Caco-2 (cell line): ENCODE measurements at regions of chr5 and their contacts with region 1.

Region 1: DNA sequence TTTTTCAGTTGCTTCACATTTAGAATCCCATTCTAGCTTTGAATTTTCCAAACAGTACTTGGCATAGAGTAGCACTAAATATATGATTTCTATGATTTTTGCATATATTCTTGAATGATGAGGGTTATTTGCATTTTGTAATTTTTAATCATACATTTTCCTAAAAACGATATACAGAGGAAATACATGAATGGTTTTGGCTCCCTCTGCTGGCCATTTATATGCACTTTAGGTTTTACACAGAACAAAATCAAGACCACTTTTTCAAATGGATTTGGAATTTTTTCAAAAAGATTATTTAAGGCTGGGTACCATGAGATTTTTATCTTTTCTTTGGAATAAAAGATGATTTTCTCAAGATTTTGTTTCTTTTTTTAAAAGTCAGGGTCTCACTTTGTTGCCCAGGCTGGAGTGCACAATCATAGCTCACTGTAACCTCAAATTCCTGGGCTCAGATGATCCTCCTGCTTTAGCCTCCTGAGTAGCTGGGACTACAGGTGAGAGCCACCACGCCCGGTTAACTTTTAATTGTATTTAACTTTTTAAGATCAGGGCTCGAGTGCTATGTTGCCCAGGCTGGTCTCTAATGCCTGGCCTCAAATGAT is 16.7 kb upstream of the COMMD10 start:
- DNase-seq: peak in 1 of 2 experiments; percentile 19
- H3K4me3 ChIP-seq: no peak overlapping the region
- H3K4me3 Mint-ChIP-seq: no peak overlapping the region
- H3K27ac Mint-ChIP-seq: no peak overlapping the region
- H3K4me1 ChIP-seq: no peaks in the 10 kb centered on the region
- H3K4me1 Mint-ChIP-seq: no peaks in the 10 kb centered on the region
- H3K27me3 ChIP-seq: peaks cover 2% of the 10 kb centered on the region; the same call in 1 of the 2 replicates
- H3K27me3 Mint-ChIP-seq: peaks cover 13% of the 10 kb centered on the region
- CTCF ChIP-seq: peak; percentile 55 to 74

Region 2: DNA sequence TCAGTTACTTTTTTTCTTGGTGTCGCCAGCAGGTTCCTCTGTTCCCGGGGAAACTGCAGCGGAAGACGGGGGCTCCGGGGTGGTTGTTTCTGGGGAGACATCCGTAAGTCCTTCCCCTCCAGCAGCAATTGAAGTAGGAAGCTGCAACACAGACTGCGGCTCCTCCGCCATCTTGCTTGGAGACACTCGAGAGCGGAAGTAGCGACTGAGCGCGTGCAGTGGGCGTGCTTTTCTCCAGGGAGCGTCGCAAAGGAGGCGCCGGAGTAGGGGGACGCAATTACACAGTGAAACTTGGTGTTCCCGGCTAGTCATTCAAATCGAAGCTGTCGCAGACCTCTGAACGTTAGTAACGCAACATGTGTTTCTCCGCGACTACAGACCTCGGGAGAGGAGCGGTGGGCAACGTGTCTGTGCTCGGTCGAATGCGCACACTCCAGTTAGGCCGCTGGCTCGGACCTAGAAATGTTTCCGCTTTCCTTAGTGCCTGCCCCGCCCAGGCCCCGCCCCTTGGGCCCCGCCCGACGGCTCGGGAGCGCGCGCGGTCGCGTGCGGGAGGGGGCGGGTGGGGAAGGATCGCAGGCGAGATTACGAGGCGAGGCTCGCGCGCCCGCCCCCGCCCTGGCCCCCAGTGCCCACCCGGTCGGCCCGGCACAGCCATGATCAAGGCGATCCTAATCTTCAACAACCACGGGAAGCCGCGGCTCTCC is 226.6 kb before region 1 on chr5 and contains the starts of genes AP3S1 and ATG12:
- CTCF ChIA-PET with region 1: interaction called, 3 read pairs
- POLR2A ChIA-PET with region 1: no interaction called
- intact Hi-C with region 1: loop called (anchors 2 kb)
- DNase-seq: peak; percentile 91 to 94
- H3K4me3 ChIP-seq: peak within 1 kb of the TSS; percentile 61
- H3K4me3 Mint-ChIP-seq: peak within 1 kb of the TSS; percentile 95
- H3K27ac Mint-ChIP-seq: peak within 1 kb of the TSS; percentile 97
- H3K4me1 ChIP-seq: peaks cover 41% of the 10 kb centered on the region
- H3K4me1 Mint-ChIP-seq: peaks cover 20% of the 10 kb centered on the region
- H3K27me3 ChIP-seq: no peaks in the 10 kb centered on the region
- H3K27me3 Mint-ChIP-seq: no peaks in the 10 kb centered on the region
- CTCF ChIP-seq: no peak
- total RNA-seq, gene AP3S1: 104 and 106 TPM in 2 replicates
- total RNA-seq, gene ATG12: 46.8 and 47.5 TPM in 2 replicates

Region 3: DNA sequence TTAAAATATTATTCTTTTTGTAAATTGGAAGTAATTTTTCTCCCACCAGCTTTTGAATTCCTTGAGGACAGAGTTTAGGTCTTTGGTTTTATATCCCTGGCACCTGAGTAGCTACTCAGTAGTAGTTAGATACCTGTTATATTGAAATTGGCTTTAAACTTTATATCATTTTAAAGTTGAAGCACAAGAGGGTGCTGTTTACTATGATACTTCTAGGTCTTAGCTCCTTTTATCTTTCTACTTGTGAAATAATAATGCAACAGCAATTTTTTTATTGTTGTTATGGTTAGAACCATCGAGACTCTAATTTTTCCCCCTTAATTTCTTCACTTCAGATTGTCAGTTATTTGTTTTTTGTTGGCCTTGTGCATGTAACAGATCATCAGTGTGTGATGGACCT is 180.1 kb before region 1 on chr5:
- CTCF ChIA-PET with region 1: no interaction called
- POLR2A ChIA-PET with region 1: no interaction called
- intact Hi-C with region 1: loop called (anchors 2 kb)
- DNase-seq: no peak
- H3K4me3 ChIP-seq: no peak overlapping the region
- H3K4me3 Mint-ChIP-seq: no peak overlapping the region
- H3K27ac Mint-ChIP-seq: no peak overlapping the region
- H3K4me1 ChIP-seq: no peaks in the 10 kb centered on the region; the same call in 1 of the 2 replicates
- H3K4me1 Mint-ChIP-seq: no peaks in the 10 kb centered on the region
- H3K27me3 ChIP-seq: no peaks in the 10 kb centered on the region
- H3K27me3 Mint-ChIP-seq: no peaks in the 10 kb centered on the region
- CTCF ChIP-seq: peak in 1 of 2 experiments; percentile 14

Region 4: GRCh38 chr5:115979201-115980041 is 88.7 kb before region 1 on chr5:
- CTCF ChIA-PET with region 1: no interaction called
- POLR2A ChIA-PET with region 1: no interaction called
- intact Hi-C with region 1: loop called (anchors 1 kb)
- DNase-seq: no peak
- H3K4me3 ChIP-seq: no peak overlapping the region
- H3K4me3 Mint-ChIP-seq: no peak overlapping the region
- H3K27ac Mint-ChIP-seq: no peak overlapping the region
- H3K4me1 ChIP-seq: no peaks in the 10 kb centered on the region
- H3K4me1 Mint-ChIP-seq: no peaks in the 10 kb centered on the region
- H3K27me3 ChIP-seq: no peaks in the 10 kb centered on the region
- H3K27me3 Mint-ChIP-seq: peaks cover 32% of the 10 kb centered on the region
- CTCF ChIP-seq: no peak